CD4-positive, alpha-beta memory T cell (primary cell): ENCODE measurements at regions of chr6 and their contacts with region 1.

Region 1: GRCh38 chr6:127918506-127919427 is 17.9 kb upstream of the THEMIS start:
- DNase-seq: peak; percentile 72 to 79 (median 75)
- H3K4me3 ChIP-seq: peak overlapping the region; percentile 59 to 68
- H3K4me3 Mint-ChIP-seq: peak overlapping the region; percentile 93 to 99 (median 96)
- H3K27ac ChIP-seq: peak overlapping the region; percentile 53
- H3K27ac Mint-ChIP-seq: peak overlapping the region; percentile 86 to 98 (median 94)
- H3K4me1 ChIP-seq: peaks cover 79% of the 10 kb centered on the region
- H3K4me1 Mint-ChIP-seq: peaks cover 53 to 89% (median 71%) of the 10 kb centered on the region in 4 donors
- H3K27me3 ChIP-seq: no peaks in the 10 kb centered on the region
- H3K27me3 Mint-ChIP-seq: no peaks in the 10 kb centered on the region

Region 2: GRCh38 chr6:127893541-127893940 is 25.2 kb before region 1 on chr6:
- CTCF ChIA-PET with region 1: interaction called, 5 read pairs
- POLR2A ChIA-PET with region 1: interaction called, 51 read pairs
- intact Hi-C with region 1: no loop called
- DNase-seq: peak in 1 of 5 donors; percentile 51
- H3K4me3 ChIP-seq: no peak overlapping the region
- H3K4me3 Mint-ChIP-seq: peak overlapping the region; percentile 71 to 89 (median 78)
- H3K27ac ChIP-seq: peak overlapping the region; percentile 45
- H3K27ac Mint-ChIP-seq: peak overlapping the region; percentile 69 to 97 (median 86)
- H3K4me1 ChIP-seq: peaks cover 79% of the 10 kb centered on the region
- H3K4me1 Mint-ChIP-seq: peaks cover 36 to 62% (median 54%) of the 10 kb centered on the region in 4 donors
- H3K27me3 ChIP-seq: no peaks in the 10 kb centered on the region
- H3K27me3 Mint-ChIP-seq: no peaks in the 10 kb centered on the region

Region 3: GRCh38 chr6:127907960-127908640 is 10.7 kb before region 1 on chr6:
- CTCF ChIA-PET with region 1: interaction called, 30 read pairs
- POLR2A ChIA-PET with region 1: interaction called, 83 read pairs
- intact Hi-C with region 1: loop called (anchors 1 kb)
- DNase-seq: peak in 4 of 5 donors; percentile 36 to 43 (median 39)
- H3K4me3 ChIP-seq: peak overlapping the region; percentile 44 to 72
- H3K4me3 Mint-ChIP-seq: peak overlapping the region; percentile 82 to 98 (median 90)
- H3K27ac ChIP-seq: peak overlapping the region; percentile 77
- H3K27ac Mint-ChIP-seq: peak overlapping the region; percentile 87 to 98 (median 95)
- H3K4me1 ChIP-seq: peaks cover 56% of the 10 kb centered on the region
- H3K4me1 Mint-ChIP-seq: peaks cover 48 to 76% (median 60%) of the 10 kb centered on the region in 4 donors
- H3K27me3 ChIP-seq: no peaks in the 10 kb centered on the region
- H3K27me3 Mint-ChIP-seq: no peaks in the 10 kb centered on the region

Region 4: GRCh38 chr6:127951172-127951917 is 32.6 kb after region 1 on chr6:
- CTCF ChIA-PET with region 1: interaction called, 7 read pairs
- POLR2A ChIA-PET with region 1: interaction called, 18 read pairs
- intact Hi-C with region 1: loop called (anchors 1 kb)
- DNase-seq: peak in 4 of 5 donors; percentile 61 to 73 (median 66)
- H3K4me3 ChIP-seq: peak overlapping the region; percentile 4 to 12
- H3K4me3 Mint-ChIP-seq: peak overlapping the region; percentile 69 to 88 (median 81)
- H3K27ac ChIP-seq: peak overlapping the region; percentile 14
- H3K27ac Mint-ChIP-seq: peak overlapping the region; percentile 83 to 91 (median 88)
- H3K4me1 ChIP-seq: peaks cover 66% of the 10 kb centered on the region
- H3K4me1 Mint-ChIP-seq: peaks cover 38 to 69% (median 55%) of the 10 kb centered on the region in 4 donors
- H3K27me3 ChIP-seq: no peaks in the 10 kb centered on the region
- H3K27me3 Mint-ChIP-seq: no peaks in the 10 kb centered on the region

Region 5: DNA sequence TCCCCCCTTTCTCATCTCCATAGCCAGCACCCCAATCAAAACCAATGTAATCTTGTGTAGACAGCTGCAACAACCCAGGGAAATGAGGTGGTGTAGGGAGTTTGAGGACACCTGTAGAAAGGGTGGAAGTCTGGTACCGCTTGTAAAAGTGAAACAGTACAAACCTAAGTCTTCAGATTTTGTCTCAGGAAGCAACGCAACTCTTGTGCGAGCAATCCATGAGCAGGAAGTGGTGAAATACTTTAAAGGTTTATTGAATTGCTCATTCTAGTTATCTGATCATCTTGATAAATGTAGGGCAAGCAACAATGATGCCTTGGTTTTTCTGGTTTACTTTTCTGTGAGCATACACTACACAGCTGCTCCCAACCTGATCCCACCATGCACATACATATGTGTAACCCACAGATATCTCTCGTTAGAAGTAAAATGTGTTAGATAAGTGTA is 53.2 kb after region 1 on chr6:
- CTCF ChIA-PET with region 1: interaction called, 5 read pairs
- POLR2A ChIA-PET with region 1: interaction called, 16 read pairs
- intact Hi-C with region 1: loop called (anchors 1 kb)
- DNase-seq: peak; percentile 81 to 89 (median 83)
- H3K4me3 ChIP-seq: peak overlapping the region in 1 of 2 donors; percentile 36
- H3K4me3 Mint-ChIP-seq: peak overlapping the region; percentile 87 to 95 (median 90)
- H3K27ac ChIP-seq: peak overlapping the region; percentile 71
- H3K27ac Mint-ChIP-seq: peak overlapping the region; percentile 92 to 98 (median 98)
- H3K4me1 ChIP-seq: peaks cover 64% of the 10 kb centered on the region
- H3K4me1 Mint-ChIP-seq: peaks cover 41 to 56% (median 46%) of the 10 kb centered on the region in 4 donors
- H3K27me3 ChIP-seq: no peaks in the 10 kb centered on the region
- H3K27me3 Mint-ChIP-seq: no peaks in the 10 kb centered on the region

Region 6: DNA sequence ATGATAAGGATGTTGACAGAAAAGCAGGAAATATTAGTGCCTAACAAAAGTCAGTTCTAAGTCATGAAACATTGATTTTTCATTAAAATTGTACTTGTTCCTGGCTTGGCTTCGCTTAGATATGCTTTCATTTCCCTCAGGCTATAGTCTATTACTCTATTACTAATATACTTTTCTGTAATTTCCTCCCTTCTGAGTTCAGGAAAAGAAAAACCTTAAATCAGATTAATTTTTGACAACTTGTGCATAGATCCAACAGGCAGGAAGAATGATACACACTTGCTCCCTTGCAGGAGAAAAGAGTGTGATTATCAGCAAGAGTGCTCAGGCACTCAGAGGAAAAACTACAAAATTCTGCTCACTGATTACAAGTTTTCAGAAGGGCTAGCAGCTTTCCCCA is 127.3 kb after region 1 on chr6:
- CTCF ChIA-PET with region 1: no interaction called
- POLR2A ChIA-PET with region 1: no interaction called
- intact Hi-C with region 1: no loop called
- DNase-seq: no peak
- H3K4me3 ChIP-seq: no peak overlapping the region
- H3K4me3 Mint-ChIP-seq: no peak overlapping the region
- H3K27ac ChIP-seq: no peak overlapping the region
- H3K27ac Mint-ChIP-seq: no peak overlapping the region
- H3K4me1 ChIP-seq: no peaks in the 10 kb centered on the region
- H3K4me1 Mint-ChIP-seq: no peaks in the 10 kb centered on the region
- H3K27me3 ChIP-seq: no peaks in the 10 kb centered on the region
- H3K27me3 Mint-ChIP-seq: no peaks in the 10 kb centered on the region

Region 7: GRCh38 chr6:128186729-128187128 is 268.0 kb after region 1 on chr6:
- CTCF ChIA-PET with region 1: no interaction called
- POLR2A ChIA-PET with region 1: no interaction called
- intact Hi-C with region 1: no loop called
- DNase-seq: no peak
- H3K4me3 ChIP-seq: no peak overlapping the region
- H3K4me3 Mint-ChIP-seq: no peak overlapping the region
- H3K27ac ChIP-seq: no peak overlapping the region
- H3K27ac Mint-ChIP-seq: no peak overlapping the region
- H3K4me1 ChIP-seq: no peaks in the 10 kb centered on the region
- H3K4me1 Mint-ChIP-seq: peaks cover 0 to 1% (median 0%) of the 10 kb centered on the region in 4 donors
- H3K27me3 ChIP-seq: no peaks in the 10 kb centered on the region
- H3K27me3 Mint-ChIP-seq: no peaks in the 10 kb centered on the region